AG04449 (cell line): ENCODE measurements at regions of chr9 and their contacts with region 1.

Region 1: GRCh38 chr9:19028835-19029451 is 4.1 kb downstream of the SAXO1 start:
- DNase-seq: peak; percentile 12
- H3K4me3 ChIP-seq: no peak overlapping the region
- CTCF ChIP-seq: peak; percentile 47

Region 2: GRCh38 chr9:17810728-17811571 is 1218.0 kb before region 1 on chr9:
- CTCF ChIA-PET with region 1: interaction called, 58 read pairs
- POLR2A ChIA-PET with region 1: no interaction called
- DNase-seq: peak; percentile 17
- H3K4me3 ChIP-seq: no peak overlapping the region
- CTCF ChIP-seq: peak; percentile 66

Region 3: DNA sequence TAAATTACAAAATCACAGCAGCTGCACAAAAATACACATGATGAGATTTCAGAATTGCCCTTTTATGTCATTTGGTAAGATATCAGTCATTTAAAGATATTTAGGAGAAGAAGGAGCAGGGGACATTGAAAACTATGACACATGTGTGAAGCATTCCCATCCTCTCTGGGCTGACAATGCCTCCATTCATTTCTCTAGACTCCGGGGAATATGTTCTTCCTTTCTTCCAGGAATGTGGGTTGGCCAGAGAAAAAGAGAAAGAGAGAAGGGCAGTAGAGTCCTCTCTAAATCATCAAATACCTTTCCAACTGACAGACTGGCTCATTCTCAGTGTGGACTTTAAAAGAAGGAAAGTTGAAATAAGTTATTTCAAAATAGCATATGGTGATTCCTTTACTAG is 760.6 kb before region 1 on chr9:
- CTCF ChIA-PET with region 1: interaction called, 12 read pairs
- POLR2A ChIA-PET with region 1: no interaction called
- DNase-seq: no peak
- H3K4me3 ChIP-seq: no peak overlapping the region
- CTCF ChIP-seq: no peak

Region 4: GRCh38 chr9:18473652-18474279 is 555.2 kb before region 1 on chr9 and contains the start of gene ADAMTSL1:
- CTCF ChIA-PET with region 1: interaction called, 11 read pairs
- POLR2A ChIA-PET with region 1: no interaction called
- DNase-seq: no peak
- H3K4me3 ChIP-seq: peak within 1 kb of the TSS; percentile 84
- CTCF ChIP-seq: no peak

Region 5: GRCh38 chr9:19018201-19018600 is 10.7 kb before region 1 on chr9:
- CTCF ChIA-PET with region 1: interaction called, 56 read pairs
- POLR2A ChIA-PET with region 1: no interaction called
- DNase-seq: no peak
- H3K4me3 ChIP-seq: no peak overlapping the region
- CTCF ChIP-seq: no peak

Region 6: GRCh38 chr9:19048966-19049916 is 20.3 kb after region 1 on chr9 and contains the start of gene RRAGA:
- CTCF ChIA-PET with region 1: interaction called, 18 read pairs
- POLR2A ChIA-PET with region 1: no interaction called
- DNase-seq: peak; percentile 85
- H3K4me3 ChIP-seq: peak within 1 kb of the TSS; percentile 69
- CTCF ChIP-seq: peak; percentile 84

Region 7: GRCh38 chr9:19456996-19457692 is 428.2 kb after region 1 on chr9:
- CTCF ChIA-PET with region 1: interaction called, 27 read pairs
- POLR2A ChIA-PET with region 1: no interaction called
- DNase-seq: no peak
- H3K4me3 ChIP-seq: peak overlapping the region; percentile 16; the same call in 1 of the 2 replicates
- CTCF ChIP-seq: peak; percentile 85